Activated B cell treated with CpG ODN at 0.5 μM for 24 hours (primary cell): ENCODE measurements at regions of chr9 and their contacts with region 1.

Region 1: DNA sequence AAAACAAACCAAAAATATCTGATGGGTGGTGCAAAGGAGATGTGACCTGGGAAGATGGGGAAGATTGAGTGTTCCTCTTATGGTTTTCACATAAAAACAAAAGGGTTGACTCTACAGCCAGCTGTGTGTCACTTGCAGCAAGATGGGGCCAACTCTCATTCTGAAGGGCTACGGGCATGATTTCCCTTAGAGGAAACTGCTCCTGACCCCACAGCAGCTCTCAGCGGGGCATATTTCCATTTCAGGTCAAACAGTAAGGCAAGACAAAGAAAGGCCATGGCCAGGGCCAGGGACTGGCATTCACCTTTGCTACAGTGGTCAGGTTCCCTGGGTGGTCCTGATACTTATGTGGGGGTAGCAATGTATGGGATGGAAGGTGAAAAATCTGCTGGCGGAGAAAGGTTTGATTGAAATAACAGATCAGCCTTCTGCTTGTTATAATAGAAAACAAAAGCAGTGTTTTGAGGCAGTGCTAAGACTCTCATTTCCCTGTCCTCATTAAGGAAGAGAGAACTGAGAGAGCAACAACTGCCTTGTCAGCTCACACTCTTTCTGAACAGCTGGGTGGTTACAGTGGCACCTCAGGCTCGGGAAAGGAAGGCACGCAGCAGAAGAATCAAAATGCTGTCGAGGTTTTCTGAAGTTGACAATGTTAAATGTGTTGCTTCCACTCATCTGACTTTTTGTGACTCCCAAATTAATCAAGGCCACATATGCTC is 120.7 kb upstream of the PCA3 start:
- DNase-seq: no peak
- ATAC-seq: peak; percentile 94
- H3K4me3 Mint-ChIP-seq: peak overlapping the region; percentile 58
- H3K27ac Mint-ChIP-seq: peak overlapping the region; percentile 76
- H3K4me1 Mint-ChIP-seq: peaks cover 32% of the 10 kb centered on the region
- H3K27me3 Mint-ChIP-seq: no peaks in the 10 kb centered on the region
- CTCF ChIP-seq: no peak

Region 2: GRCh38 chr9:76198336-76198735 is 445.2 kb before region 1 on chr9:
- CTCF ChIA-PET with region 1: no interaction called
- POLR2A ChIA-PET with region 1: no interaction called
- intact Hi-C with region 1: no loop called
- DNase-seq: no peak
- ATAC-seq: no peak
- H3K4me3 Mint-ChIP-seq: no peak overlapping the region
- H3K27ac Mint-ChIP-seq: no peak overlapping the region
- H3K4me1 Mint-ChIP-seq: no peaks in the 10 kb centered on the region
- H3K27me3 Mint-ChIP-seq: no peaks in the 10 kb centered on the region
- CTCF ChIP-seq: no peak

Region 3: GRCh38 chr9:76490249-76490990 is 153.1 kb before region 1 on chr9:
- CTCF ChIA-PET with region 1: no interaction called
- POLR2A ChIA-PET with region 1: no interaction called
- intact Hi-C with region 1: no loop called
- DNase-seq: no peak
- ATAC-seq: no peak
- H3K4me3 Mint-ChIP-seq: no peak overlapping the region
- H3K27ac Mint-ChIP-seq: no peak overlapping the region
- H3K4me1 Mint-ChIP-seq: peaks cover 56% of the 10 kb centered on the region
- H3K27me3 Mint-ChIP-seq: no peaks in the 10 kb centered on the region
- CTCF ChIP-seq: no peak

Region 4: DNA sequence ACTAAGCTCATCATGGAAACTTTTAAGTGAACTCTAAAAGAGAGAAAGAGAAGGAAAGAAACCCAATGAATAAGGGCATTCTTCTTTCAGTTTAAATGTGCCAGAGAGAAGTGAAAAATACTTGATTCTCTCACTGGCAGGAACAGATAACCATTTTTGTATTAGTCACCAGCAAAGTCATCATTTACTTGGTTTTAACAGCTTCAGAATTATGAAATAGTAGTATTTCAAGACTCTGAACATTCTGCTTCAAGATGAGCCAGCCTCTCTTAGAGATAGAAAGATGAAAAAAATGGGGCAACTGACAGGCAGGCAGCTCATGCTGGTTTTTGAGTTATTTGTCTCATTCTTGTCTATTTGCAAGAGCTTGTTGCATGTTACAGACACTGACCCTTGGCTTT is 81.0 kb before region 1 on chr9:
- CTCF ChIA-PET with region 1: no interaction called
- POLR2A ChIA-PET with region 1: no interaction called
- intact Hi-C with region 1: loop called (anchors 5 kb)
- DNase-seq: no peak
- ATAC-seq: peak; percentile 57
- H3K4me3 Mint-ChIP-seq: peak overlapping the region; percentile 55
- H3K27ac Mint-ChIP-seq: peak overlapping the region; percentile 65
- H3K4me1 Mint-ChIP-seq: peaks cover 63% of the 10 kb centered on the region
- H3K27me3 Mint-ChIP-seq: no peaks in the 10 kb centered on the region
- CTCF ChIP-seq: no peak

Region 5: DNA sequence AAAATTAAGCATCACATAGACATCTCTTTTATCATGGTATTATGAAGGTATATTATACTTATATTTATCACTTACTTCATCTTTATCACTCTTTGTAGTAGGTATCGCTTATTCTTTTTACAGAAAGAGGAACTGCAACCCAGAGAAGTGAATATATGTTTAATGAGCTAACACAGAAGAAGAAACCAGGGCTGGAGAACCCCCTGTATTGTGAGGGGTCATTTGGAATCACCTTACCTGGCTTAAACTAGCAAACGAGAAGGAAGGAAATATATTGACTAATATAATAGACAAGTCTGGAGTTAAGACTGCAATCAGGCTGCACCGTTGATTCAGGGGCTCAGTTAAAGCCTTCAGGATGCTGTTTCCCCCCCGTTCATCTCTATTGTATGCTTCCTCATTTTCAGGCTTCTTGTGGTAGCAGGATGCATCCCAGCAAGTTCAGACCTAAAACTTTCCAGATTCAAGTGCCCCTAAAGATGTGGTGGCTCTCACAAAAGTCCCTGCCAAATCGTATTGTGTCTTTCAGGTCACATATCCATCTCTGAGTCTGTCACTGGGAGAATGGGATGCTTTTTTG is 38.1 kb before region 1 on chr9:
- CTCF ChIA-PET with region 1: no interaction called
- POLR2A ChIA-PET with region 1: no interaction called
- intact Hi-C with region 1: loop called (anchors 5 kb)
- DNase-seq: no peak
- ATAC-seq: peak; percentile 83
- H3K4me3 Mint-ChIP-seq: no peak overlapping the region
- H3K27ac Mint-ChIP-seq: no peak overlapping the region
- H3K4me1 Mint-ChIP-seq: peaks cover 30% of the 10 kb centered on the region
- H3K27me3 Mint-ChIP-seq: no peaks in the 10 kb centered on the region
- CTCF ChIP-seq: no peak